Ascending aorta (tissue), 2 donors: ENCODE measurements at regions of chr19 and their contacts with region 1.

Region 1: DNA sequence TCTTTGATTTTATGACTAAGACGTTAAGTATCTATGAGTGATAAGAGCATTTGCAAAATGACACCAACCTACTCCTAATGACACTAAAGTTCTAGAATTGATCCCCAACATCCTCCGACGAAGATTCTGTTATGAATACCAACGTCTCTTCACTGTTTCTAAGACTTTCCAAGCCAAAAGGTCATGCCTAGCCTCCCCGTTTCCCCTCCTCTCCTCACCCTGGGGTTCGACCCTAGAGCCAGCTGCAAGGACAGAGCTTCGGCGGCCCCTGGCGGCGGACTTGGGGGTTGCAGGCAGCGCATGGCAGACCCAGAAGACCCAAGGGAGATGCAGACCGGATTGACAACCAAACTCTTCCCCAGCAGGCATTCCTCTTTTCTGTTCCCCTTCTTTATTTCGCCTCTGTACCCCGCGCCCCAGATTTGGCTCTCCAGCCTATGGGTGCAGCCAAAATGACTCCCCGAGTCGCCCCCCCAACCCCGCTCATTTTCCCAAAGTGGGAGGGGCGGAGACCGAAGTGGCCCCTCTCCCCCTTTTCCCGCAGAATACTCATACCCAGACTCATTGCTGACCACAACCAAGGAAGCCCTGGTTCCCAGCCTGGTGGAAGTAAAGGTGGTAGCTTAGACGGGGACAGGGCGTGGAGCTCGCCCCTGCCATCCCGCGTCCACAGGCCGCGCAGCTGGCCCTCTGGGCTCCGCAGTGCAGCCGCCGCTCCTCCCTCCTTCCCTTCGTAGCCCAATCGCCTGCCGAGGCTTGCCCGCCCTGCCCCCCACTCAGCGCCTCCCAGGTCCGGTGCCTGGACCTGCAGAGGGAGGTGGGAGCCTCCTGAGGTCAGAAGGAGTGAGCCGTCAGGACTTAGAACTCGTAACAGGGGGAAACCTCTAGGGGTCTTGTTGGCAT is 4.1 kb upstream of the EML2 start:
- DNase-seq: peak; percentile 25 to 89
- H3K4me3 ChIP-seq: no peak overlapping the region
- H3K27ac ChIP-seq: no peak overlapping the region
- H3K4me1 ChIP-seq: peaks cover 10 to 13% of the 10 kb centered on the region in 2 donors
- H3K27me3 ChIP-seq: no peaks in the 10 kb centered on the region
- CTCF ChIP-seq: peak; percentile 96 to 97 (median 97)

Region 2: GRCh38 chr19:45423589-45424190 is 219.6 kb before region 1 on chr19 and contains the start of gene ERCC1:
- intact Hi-C with region 1: loop called (anchors 10 kb)
- DNase-seq: peak; percentile 76 to 98
- H3K4me3 ChIP-seq: peak within 1 kb of the TSS; percentile 69 to 85
- H3K27ac ChIP-seq: peak within 1 kb of the TSS; percentile 89 to 95
- H3K4me1 ChIP-seq: peaks cover 0 to 32% of the 10 kb centered on the region in 2 donors
- H3K27me3 ChIP-seq: no peaks in the 10 kb centered on the region
- CTCF ChIP-seq: no peak
- total RNA-seq, gene ERCC1: 142 TPM

Region 3: GRCh38 chr19:45523642-45524256 is 119.5 kb before region 1 on chr19:
- intact Hi-C with region 1: loop called (anchors 1 kb)
- DNase-seq: peak; percentile 47 to 89
- H3K4me3 ChIP-seq: no peak overlapping the region
- H3K27ac ChIP-seq: peak overlapping the region; percentile 38 to 46
- H3K4me1 ChIP-seq: peaks cover 0 to 6% of the 10 kb centered on the region in 2 donors
- H3K27me3 ChIP-seq: no peaks in the 10 kb centered on the region
- CTCF ChIP-seq: peak; percentile 86 to 92 (median 90)

Region 4: GRCh38 chr19:45584332-45585157 is 58.7 kb before region 1 on chr19 and contains the start of gene OPA3:
- intact Hi-C with region 1: loop called (anchors 2 kb)
- DNase-seq: peak; percentile 99 to 100
- H3K4me3 ChIP-seq: peak within 1 kb of the TSS; percentile 67
- H3K27ac ChIP-seq: peak within 1 kb of the TSS; percentile 95 to 97
- H3K4me1 ChIP-seq: peaks cover 0 to 10% of the 10 kb centered on the region in 2 donors
- H3K27me3 ChIP-seq: no peaks in the 10 kb centered on the region
- CTCF ChIP-seq: no peak
- total RNA-seq, gene OPA3: 4.5 TPM

Region 5: GRCh38 chr19:45607071-45608029 is 35.9 kb before region 1 on chr19:
- intact Hi-C with region 1: loop called (anchors 1 kb)
- DNase-seq: peak in 1 of 2 donors; percentile 83
- H3K4me3 ChIP-seq: peak overlapping the region; percentile 17 to 41
- H3K27ac ChIP-seq: peak overlapping the region in 1 of 2 donors; percentile 20
- H3K4me1 ChIP-seq: peaks cover 0 to 7% of the 10 kb centered on the region in 2 donors
- H3K27me3 ChIP-seq: peaks cover 10% of the 10 kb centered on the region
- CTCF ChIP-seq: peak; percentile 83 to 92 (median 92)

Region 6: GRCh38 chr19:45667620-45668341 is 24.5 kb after region 1 on chr19 and contains the start of gene GIPR:
- intact Hi-C with region 1: no loop called
- DNase-seq: no peak
- H3K4me3 ChIP-seq: peak within 1 kb of the TSS in 1 of 2 donors; percentile 52
- H3K27ac ChIP-seq: no peak within 1 kb of the TSS
- H3K4me1 ChIP-seq: peaks cover 8 to 9% of the 10 kb centered on the region in 2 donors
- H3K27me3 ChIP-seq: peaks cover 30% of the 10 kb centered on the region
- CTCF ChIP-seq: no peak
- total RNA-seq, gene GIPR: not detected